ENCODE measurements at regions of chr5 and their contacts with region 1.

Region 1: DNA sequence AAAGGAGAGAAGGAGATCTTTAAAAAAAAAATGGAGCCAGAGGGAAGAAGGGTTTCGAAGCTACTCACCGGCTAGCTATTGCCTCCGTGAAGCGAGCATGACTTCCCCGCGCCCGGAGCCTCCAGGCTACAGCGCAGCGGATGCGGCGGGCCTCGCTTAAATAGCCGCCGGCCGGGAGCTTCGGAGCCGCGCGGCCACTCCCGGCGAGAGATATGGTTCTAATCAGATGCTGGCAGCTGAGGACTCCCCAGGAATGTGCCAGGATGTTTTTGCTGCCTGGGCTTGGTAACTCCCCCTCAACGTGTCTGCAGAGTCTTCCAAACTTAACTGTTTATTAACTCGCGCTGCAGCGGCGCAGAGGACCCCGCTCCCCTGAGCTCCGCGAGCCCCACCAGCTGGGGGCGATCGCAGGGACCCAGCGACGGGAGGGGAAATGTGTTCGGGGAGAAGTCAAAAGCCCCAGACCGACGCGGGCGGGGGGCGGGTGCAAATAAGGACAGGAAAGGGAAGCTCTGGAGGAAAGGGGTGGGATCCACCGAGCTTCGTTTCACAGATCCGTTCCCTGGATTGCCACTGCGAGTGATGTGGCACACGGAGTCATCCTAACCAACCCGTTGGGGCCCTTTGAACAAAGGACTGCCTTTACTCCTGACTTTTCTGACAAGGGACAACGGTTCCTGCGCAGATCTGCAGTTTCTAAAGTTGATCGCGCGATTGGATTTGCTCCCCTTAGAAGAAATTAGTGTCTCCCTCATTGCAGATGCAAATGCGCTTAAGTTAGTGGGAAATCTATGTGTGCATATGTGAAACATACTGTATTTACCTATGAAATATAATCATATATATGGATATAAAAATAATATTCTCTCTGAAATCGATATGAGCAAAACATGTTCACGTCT is at the start of gene DAB2:
- DNase-seq: peak; percentile 99
- H3K4me3 ChIP-seq: peak within 1 kb of the TSS; percentile 56 to 100 (median 99)
- H3K27ac ChIP-seq: peak within 1 kb of the TSS; percentile 91
- H3K4me1 ChIP-seq: peaks cover 61% of the 10 kb centered on the region
- H3K27me3 ChIP-seq: no peaks in the 10 kb centered on the region
- CTCF ChIP-seq: peak; percentile 87 to 88
- POLR2A ChIP-seq: peak; percentile 36
- total RNA-seq, gene DAB2: 245 and 283 TPM in 2 replicates

Region 2: GRCh38 chr5:39376293-39376714 is 48.7 kb before region 1 on chr5:
- CTCF ChIA-PET with region 1: interaction called, 36 read pairs
- POLR2A ChIA-PET with region 1: interaction called, 6 read pairs
- dilution Hi-C with region 1: no loop called
- intact Hi-C with region 1: loop called (anchors 2 kb)
- DNase-seq: peak; percentile 72
- H3K4me3 ChIP-seq: no peak overlapping the region
- H3K27ac ChIP-seq: no peak overlapping the region
- H3K4me1 ChIP-seq: no peaks in the 10 kb centered on the region
- H3K27me3 ChIP-seq: no peaks in the 10 kb centered on the region
- CTCF ChIP-seq: peak; percentile 57 to 71
- POLR2A ChIP-seq: no peak

Region 3: DNA sequence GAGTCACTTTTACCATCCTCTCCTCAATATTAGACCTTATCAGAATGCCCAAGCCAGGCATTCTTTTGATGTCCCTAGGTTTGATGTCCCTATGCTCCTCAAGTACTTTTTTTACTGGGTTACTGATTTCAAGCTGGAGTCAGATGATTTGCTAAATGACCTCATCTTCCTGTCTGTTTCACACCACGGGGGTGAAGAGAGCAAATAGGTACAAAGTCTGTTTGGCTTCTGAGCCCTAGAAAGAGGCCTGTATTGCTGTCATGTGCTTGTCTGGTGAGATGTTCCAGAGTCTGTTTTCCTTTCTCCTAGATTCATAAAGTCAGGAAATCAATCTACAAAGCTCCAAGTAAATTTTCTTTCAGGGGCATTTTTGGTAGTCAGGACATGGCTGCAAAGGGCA is 12.5 kb after region 1 on chr5:
- CTCF ChIA-PET with region 1: interaction called, 16 read pairs
- POLR2A ChIA-PET with region 1: interaction called, 10 read pairs
- dilution Hi-C with region 1: no loop called
- intact Hi-C with region 1: no loop called
- DNase-seq: peak; percentile 40
- H3K4me3 ChIP-seq: no peak overlapping the region
- H3K27ac ChIP-seq: no peak overlapping the region
- H3K4me1 ChIP-seq: peaks cover 30% of the 10 kb centered on the region
- H3K27me3 ChIP-seq: no peaks in the 10 kb centered on the region
- CTCF ChIP-seq: no peak
- POLR2A ChIP-seq: no peak

Region 4: GRCh38 chr5:39475881-39476842 is 51.2 kb after region 1 on chr5:
- CTCF ChIA-PET with region 1: interaction called, 14 read pairs
- POLR2A ChIA-PET with region 1: interaction called, 9 read pairs
- dilution Hi-C with region 1: no loop called
- intact Hi-C with region 1: loop called (anchors 2 kb)
- DNase-seq: peak; percentile 81
- H3K4me3 ChIP-seq: no peak overlapping the region
- H3K27ac ChIP-seq: no peak overlapping the region
- H3K4me1 ChIP-seq: peaks cover 9% of the 10 kb centered on the region
- H3K27me3 ChIP-seq: no peaks in the 10 kb centered on the region
- CTCF ChIP-seq: no peak
- POLR2A ChIP-seq: no peak

Region 5: GRCh38 chr5:39520232-39520572 is 95.2 kb after region 1 on chr5:
- CTCF ChIA-PET with region 1: interaction called, 50 read pairs
- POLR2A ChIA-PET with region 1: interaction called, 34 read pairs
- dilution Hi-C with region 1: loop called (anchors 25 kb)
- intact Hi-C with region 1: loop called (anchors 1 kb)
- DNase-seq: peak; percentile 95
- H3K4me3 ChIP-seq: peak overlapping the region in 1 of 3 experiments; percentile 46
- H3K27ac ChIP-seq: peak overlapping the region; percentile 95
- H3K4me1 ChIP-seq: peaks cover 55% of the 10 kb centered on the region
- H3K27me3 ChIP-seq: no peaks in the 10 kb centered on the region
- CTCF ChIP-seq: no peak
- POLR2A ChIP-seq: peak; percentile 53

Region 6: DNA sequence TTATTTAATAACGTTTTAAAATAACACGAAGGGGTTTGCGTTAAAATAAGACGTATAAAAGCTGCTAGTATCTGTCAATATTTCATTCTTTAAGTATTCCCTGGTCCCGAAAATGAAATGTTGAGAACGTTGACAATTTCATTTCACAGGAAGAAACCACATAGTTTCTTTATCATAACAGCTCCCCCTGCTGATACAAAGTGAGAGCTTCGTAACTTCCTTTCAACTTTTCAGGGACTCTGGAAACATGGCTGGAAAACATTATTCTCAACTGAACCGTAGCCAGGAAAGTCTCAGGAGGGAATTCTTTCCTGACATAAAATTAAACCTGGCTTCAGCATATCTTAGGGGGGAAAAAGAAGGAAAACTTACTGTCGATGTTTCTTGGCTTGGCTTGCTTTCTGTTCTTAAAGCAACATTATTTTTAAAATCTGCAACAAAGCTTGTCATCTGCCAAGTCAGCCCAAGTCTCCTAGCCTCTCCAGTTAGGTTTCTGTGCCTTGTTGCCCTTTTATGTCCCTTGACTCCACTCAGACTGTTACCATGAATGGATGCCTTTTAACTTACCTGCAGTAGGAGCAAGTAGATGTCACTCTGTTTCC is 122.7 kb after region 1 on chr5:
- CTCF ChIA-PET with region 1: interaction called, 210 read pairs
- POLR2A ChIA-PET with region 1: interaction called, 50 read pairs
- dilution Hi-C with region 1: loop called (anchors 25 kb)
- intact Hi-C with region 1: loop called (anchors 1 kb)
- DNase-seq: peak; percentile 85
- H3K4me3 ChIP-seq: no peak overlapping the region
- H3K27ac ChIP-seq: peak overlapping the region; percentile 15
- H3K4me1 ChIP-seq: peaks cover 25% of the 10 kb centered on the region
- H3K27me3 ChIP-seq: no peaks in the 10 kb centered on the region
- CTCF ChIP-seq: peak; percentile 54 to 55
- POLR2A ChIP-seq: no peak

Measured in endothelial cell of umbilical vein (primary cell).